ENCODE measurements at regions of chr3 and their contacts with region 1.

Region 1: GRCh38 chr3:176514297-176514696 is 683.0 kb downstream of the TBL1XR1 start:
- DNase-seq: peak; percentile 64
- ATAC-seq: peak; percentile 98
- H3K4me3 ChIP-seq: no peak overlapping the region
- H3K27ac ChIP-seq: no peak overlapping the region
- H3K4me1 ChIP-seq: no peaks in the 10 kb centered on the region
- H3K27me3 ChIP-seq: no peaks in the 10 kb centered on the region
- CTCF ChIP-seq: peak; percentile 88
- EP300 ChIP-seq: no peak
- POLR2A ChIP-seq: no peak
- RAD21 ChIP-seq: peak; percentile 80

Region 2: DNA sequence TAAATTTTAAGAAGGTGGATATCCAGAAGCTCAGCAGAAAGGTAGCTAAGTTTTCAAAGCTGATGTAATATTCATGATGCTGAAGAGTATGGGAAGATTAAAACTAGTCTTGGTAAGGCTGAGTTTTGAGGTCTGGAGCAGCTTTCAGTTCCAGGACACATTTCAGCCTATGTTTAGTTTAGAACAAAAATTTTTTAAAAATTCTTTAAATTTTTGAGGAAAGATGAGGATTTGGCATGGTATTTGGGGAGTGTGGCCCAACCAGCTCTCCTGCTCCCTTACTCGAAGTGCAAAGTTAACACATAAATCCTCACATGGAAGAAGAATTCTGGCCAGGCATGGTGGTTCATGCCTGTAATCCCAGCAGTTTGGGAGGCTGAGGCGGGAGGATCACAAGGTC is 616.1 kb before region 1 on chr3:
- CTCF ChIA-PET with region 1: no interaction called
- POLR2A ChIA-PET with region 1: no interaction called
- in situ Hi-C with region 1: no loop called
- intact Hi-C with region 1: no loop called
- DNase-seq: no peak
- ATAC-seq: no peak
- H3K4me3 ChIP-seq: no peak overlapping the region
- H3K27ac ChIP-seq: no peak overlapping the region
- H3K4me1 ChIP-seq: no peaks in the 10 kb centered on the region
- H3K27me3 ChIP-seq: no peaks in the 10 kb centered on the region
- CTCF ChIP-seq: no peak
- EP300 ChIP-seq: no peak
- POLR2A ChIP-seq: no peak
- RAD21 ChIP-seq: no peak

Region 3: GRCh38 chr3:176663837-176664831 is 149.8 kb after region 1 on chr3:
- CTCF ChIA-PET with region 1: interaction called, 6 read pairs
- POLR2A ChIA-PET with region 1: no interaction called
- in situ Hi-C with region 1: no loop called
- intact Hi-C with region 1: loop called (anchors 1 kb)
- DNase-seq: peak; percentile 36
- ATAC-seq: peak; percentile 82
- H3K4me3 ChIP-seq: no peak overlapping the region
- H3K27ac ChIP-seq: no peak overlapping the region
- H3K4me1 ChIP-seq: no peaks in the 10 kb centered on the region
- H3K27me3 ChIP-seq: no peaks in the 10 kb centered on the region
- CTCF ChIP-seq: peak; percentile 42; the same call in 1 of the 2 replicates
- EP300 ChIP-seq: no peak
- POLR2A ChIP-seq: no peak
- RAD21 ChIP-seq: no peak

Region 4: DNA sequence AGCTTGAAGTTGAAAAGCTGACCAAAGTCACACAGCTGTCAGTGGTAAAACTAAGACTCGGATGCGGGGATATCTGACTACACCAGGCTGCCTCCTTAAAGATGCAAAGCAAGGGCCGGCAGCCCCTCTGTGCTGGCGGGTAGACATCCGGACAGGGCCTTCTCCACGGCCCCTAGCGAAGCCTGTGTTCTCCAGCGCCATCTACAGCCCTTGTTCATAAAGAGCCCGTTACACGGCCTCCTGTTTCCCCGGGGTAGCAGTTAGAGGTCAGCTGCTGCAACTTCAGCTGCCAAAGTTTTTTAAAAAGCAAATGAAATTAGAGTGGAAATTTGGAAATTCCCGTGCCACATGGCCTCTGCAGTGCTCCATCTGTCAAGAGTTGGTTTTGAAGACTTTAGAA is 300.0 kb after region 1 on chr3:
- CTCF ChIA-PET with region 1: no interaction called
- POLR2A ChIA-PET with region 1: no interaction called
- in situ Hi-C with region 1: no loop called
- intact Hi-C with region 1: loop called (anchors 1 kb)
- DNase-seq: peak; percentile 32
- ATAC-seq: peak; percentile 100
- H3K4me3 ChIP-seq: no peak overlapping the region
- H3K27ac ChIP-seq: no peak overlapping the region
- H3K4me1 ChIP-seq: no peaks in the 10 kb centered on the region
- H3K27me3 ChIP-seq: no peaks in the 10 kb centered on the region
- CTCF ChIP-seq: peak; percentile 72
- EP300 ChIP-seq: no peak
- POLR2A ChIP-seq: no peak
- RAD21 ChIP-seq: no peak

Region 5: GRCh38 chr3:176939022-176939817 is 424.9 kb after region 1 on chr3:
- CTCF ChIA-PET with region 1: interaction called, 17 read pairs
- POLR2A ChIA-PET with region 1: no interaction called
- in situ Hi-C with region 1: loop called (anchors 5 kb)
- intact Hi-C with region 1: no loop called
- DNase-seq: peak; percentile 67
- ATAC-seq: peak; percentile 94
- H3K4me3 ChIP-seq: no peak overlapping the region
- H3K27ac ChIP-seq: no peak overlapping the region
- H3K4me1 ChIP-seq: no peaks in the 10 kb centered on the region
- H3K27me3 ChIP-seq: no peaks in the 10 kb centered on the region; a peak in 1 of 5 replicates
- CTCF ChIP-seq: peak; percentile 85
- EP300 ChIP-seq: no peak
- POLR2A ChIP-seq: no peak
- RAD21 ChIP-seq: peak; percentile 70

Region 6: DNA sequence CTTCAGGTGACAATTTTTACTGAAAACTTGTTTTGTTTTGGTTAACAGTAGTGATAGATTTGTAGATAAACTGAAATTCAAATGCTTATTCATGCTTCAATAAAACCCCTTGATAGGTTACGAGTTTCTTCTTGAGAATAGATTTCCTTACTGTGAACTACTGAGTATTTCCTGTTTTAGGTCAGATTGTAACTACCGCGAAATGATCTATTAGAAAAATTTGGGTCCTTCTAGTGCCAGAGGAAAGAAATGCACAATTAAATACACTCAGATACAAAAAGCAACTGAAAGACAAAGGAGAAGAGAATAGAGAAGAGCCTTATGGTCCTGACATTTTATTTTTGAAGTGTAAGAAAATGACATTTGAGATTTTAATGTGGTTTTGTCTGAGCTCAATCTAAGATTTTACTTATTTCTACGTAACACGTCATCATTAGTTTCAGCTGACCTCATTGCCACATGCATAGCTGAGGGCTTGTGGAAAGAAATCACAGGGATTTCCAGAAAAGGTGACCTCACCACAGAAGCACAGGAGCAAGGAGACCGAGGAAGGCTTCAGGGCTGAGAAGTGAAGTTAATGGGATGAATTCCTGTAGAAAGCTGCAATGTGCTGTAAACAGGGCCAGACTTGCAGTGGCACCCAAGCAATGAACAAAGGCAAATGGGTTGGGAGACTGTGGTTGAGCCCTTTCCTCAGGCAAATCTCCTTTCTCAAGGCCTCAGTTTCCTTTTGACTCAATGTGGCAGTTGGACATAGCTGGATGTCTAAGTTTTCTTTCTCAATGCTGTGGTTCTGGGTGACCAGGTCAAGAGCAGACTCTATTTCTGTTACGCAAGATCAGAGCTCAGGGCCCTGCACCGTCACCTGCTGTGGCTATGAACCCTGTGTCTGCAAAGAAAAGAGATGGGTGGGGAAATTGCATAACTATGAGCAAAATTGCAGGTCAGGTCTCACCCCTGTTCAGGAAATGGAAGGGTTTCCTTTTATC is 935.0 kb after region 1 on chr3:
- CTCF ChIA-PET with region 1: no interaction called
- POLR2A ChIA-PET with region 1: no interaction called
- in situ Hi-C with region 1: loop called (anchors 25 kb)
- intact Hi-C with region 1: no loop called
- DNase-seq: peak; percentile 58
- ATAC-seq: peak; percentile 95
- H3K4me3 ChIP-seq: no peak overlapping the region
- H3K27ac ChIP-seq: no peak overlapping the region
- H3K4me1 ChIP-seq: peaks cover 30% of the 10 kb centered on the region
- H3K27me3 ChIP-seq: no peaks in the 10 kb centered on the region
- CTCF ChIP-seq: no peak
- EP300 ChIP-seq: peak in 1 of 2 experiments; percentile 43; a peak in 2 of 4 replicates
- POLR2A ChIP-seq: no peak
- RAD21 ChIP-seq: no peak

Region 7: GRCh38 chr3:177777699-177778098 is 1263.4 kb after region 1 on chr3:
- CTCF ChIA-PET with region 1: no interaction called
- POLR2A ChIA-PET with region 1: no interaction called
- in situ Hi-C with region 1: loop called (anchors 25 kb)
- intact Hi-C with region 1: loop called (anchors 2 kb)
- DNase-seq: peak; percentile 52
- ATAC-seq: peak; percentile 97
- H3K4me3 ChIP-seq: no peak overlapping the region
- H3K27ac ChIP-seq: no peak overlapping the region
- H3K4me1 ChIP-seq: no peaks in the 10 kb centered on the region
- H3K27me3 ChIP-seq: 0 out of 5 replicates have a peak, but pooled peaks cover 0 to 2% of the 10 kb centered on the region in 2 experiments
- CTCF ChIP-seq: peak; percentile 81
- EP300 ChIP-seq: no peak
- POLR2A ChIP-seq: no peak
- RAD21 ChIP-seq: peak; percentile 68

Region 8: DNA sequence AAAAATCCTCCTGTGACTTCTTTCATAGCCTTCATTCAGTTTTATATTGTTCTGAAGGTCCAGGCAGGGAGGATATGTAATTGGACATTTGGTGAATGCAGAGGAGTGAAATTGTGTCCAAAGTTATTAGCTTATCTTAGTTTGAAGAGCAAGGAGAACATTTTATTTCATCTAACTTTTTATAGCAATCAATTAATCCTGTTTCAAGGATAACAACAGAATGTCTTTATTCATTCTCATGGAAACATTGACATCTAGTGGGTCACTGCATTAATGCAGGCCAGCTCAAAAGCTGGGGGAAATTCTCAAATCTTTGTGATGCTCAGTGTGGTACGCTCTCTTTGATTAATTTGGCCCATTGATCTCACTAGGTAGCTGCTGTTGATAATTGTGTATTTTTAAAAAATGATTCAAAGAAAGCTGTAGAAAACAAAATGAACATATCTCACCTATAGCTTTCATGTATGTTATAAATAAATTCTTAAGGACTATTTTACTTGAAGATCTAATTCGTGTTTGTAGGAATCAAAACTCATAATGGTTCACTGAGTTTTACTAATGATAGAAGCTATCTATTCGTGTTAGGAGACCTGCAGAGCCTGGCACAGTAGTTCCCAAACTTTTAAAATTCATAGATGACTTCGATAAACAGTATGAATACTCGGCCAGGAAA is 1871.1 kb after region 1 on chr3:
- CTCF ChIA-PET with region 1: no interaction called
- POLR2A ChIA-PET with region 1: no interaction called
- in situ Hi-C with region 1: no loop called
- intact Hi-C with region 1: loop called (anchors 1 kb)
- DNase-seq: peak; percentile 1
- ATAC-seq: peak; percentile 57; the same call in 2 of the 3 replicates
- H3K4me3 ChIP-seq: no peak overlapping the region
- H3K27ac ChIP-seq: no peak overlapping the region
- H3K4me1 ChIP-seq: peaks cover 11% of the 10 kb centered on the region
- H3K27me3 ChIP-seq: no peaks in the 10 kb centered on the region
- CTCF ChIP-seq: peak; percentile 65
- EP300 ChIP-seq: no peak
- POLR2A ChIP-seq: no peak
- RAD21 ChIP-seq: peak; percentile 35; the same call in 1 of the 2 replicates

Measured in HepG2 (cell line).